ENCODE measurements at regions of chr6 and their contacts with region 1.

Region 1: GRCh38 chr6:90285611-90286381 is 10.8 kb downstream of the BACH2 start:
- DNase-seq: peak; percentile 18
- ATAC-seq: peak; percentile 92
- H3K4me3 ChIP-seq: no peak overlapping the region
- H3K27ac ChIP-seq: no peak overlapping the region
- H3K4me1 ChIP-seq: no peaks in the 10 kb centered on the region
- H3K27me3 ChIP-seq: peaks cover 3 to 16% of the 10 kb centered on the region in 2 experiments; a peak in 3 of 5 replicates
- CTCF ChIP-seq: no peak
- EP300 ChIP-seq: no peak
- POLR2A ChIP-seq: no peak
- RAD21 ChIP-seq: no peak

Region 2: GRCh38 chr6:90256698-90257485 is 28.9 kb before region 1 on chr6:
- CTCF ChIA-PET with region 1: no interaction called
- POLR2A ChIA-PET with region 1: no interaction called
- in situ Hi-C with region 1: no loop called
- intact Hi-C with region 1: no loop called
- DNase-seq: no peak
- ATAC-seq: no peak
- H3K4me3 ChIP-seq: no peak overlapping the region
- H3K27ac ChIP-seq: no peak overlapping the region
- H3K4me1 ChIP-seq: no peaks in the 10 kb centered on the region
- H3K27me3 ChIP-seq: no peaks in the 10 kb centered on the region
- CTCF ChIP-seq: no peak
- EP300 ChIP-seq: no peak
- POLR2A ChIP-seq: no peak
- RAD21 ChIP-seq: no peak

Region 3: DNA sequence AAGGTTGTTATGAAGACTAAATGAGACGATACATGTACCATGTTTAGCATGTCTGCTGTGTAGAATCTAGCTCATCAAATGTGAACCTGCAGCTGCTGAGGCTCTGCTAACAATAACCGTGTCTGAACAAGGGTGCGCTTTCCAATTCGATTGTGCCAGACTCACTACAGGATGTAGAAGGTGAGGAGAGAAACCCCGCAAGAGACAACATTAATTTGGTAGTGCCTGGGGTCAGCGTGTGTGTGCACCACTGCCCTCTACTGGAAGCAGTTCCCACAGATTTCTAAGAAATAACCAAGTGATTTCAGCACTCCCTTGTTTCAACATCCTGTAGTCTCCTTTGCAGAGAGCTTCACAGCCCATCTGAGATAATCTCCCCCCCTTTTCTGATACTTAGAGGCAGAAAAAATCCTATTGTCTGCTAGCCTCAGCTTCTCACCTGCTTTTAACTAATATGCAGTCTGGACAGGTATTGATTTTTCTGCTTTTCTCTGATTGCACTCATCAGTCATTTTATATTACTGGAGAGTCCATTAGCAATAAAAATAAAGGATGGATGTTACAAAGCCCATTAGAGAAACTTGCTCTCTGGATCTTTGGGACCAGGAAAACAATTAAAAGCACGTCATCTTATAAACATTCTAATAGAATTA is 107.6 kb after region 1 on chr6:
- CTCF ChIA-PET with region 1: interaction called, 5 read pairs
- POLR2A ChIA-PET with region 1: no interaction called
- in situ Hi-C with region 1: no loop called
- intact Hi-C with region 1: loop called (anchors 2 kb)
- DNase-seq: peak; percentile 12
- ATAC-seq: peak; percentile 75
- H3K4me3 ChIP-seq: no peak overlapping the region
- H3K27ac ChIP-seq: no peak overlapping the region
- H3K4me1 ChIP-seq: no peaks in the 10 kb centered on the region
- H3K27me3 ChIP-seq: peaks cover 0 to 4% of the 10 kb centered on the region in 2 experiments; a peak in 1 of 5 replicates
- CTCF ChIP-seq: peak; percentile 67
- EP300 ChIP-seq: no peak
- POLR2A ChIP-seq: no peak
- RAD21 ChIP-seq: no peak

Measured in HepG2 (cell line).